ENCODE measurements at regions of chr12 and their contacts with region 1.

Region 1: GRCh38 chr12:69070319-69071090 is 137.5 kb upstream of the CPM start:
- DNase-seq: peak; percentile 32
- H3K4me3 ChIP-seq: no peak overlapping the region
- H3K27ac ChIP-seq: no peak overlapping the region
- H3K27me3 ChIP-seq: no peaks in the 10 kb centered on the region
- CTCF ChIP-seq: peak; percentile 99

Region 2: GRCh38 chr12:68831272-68831671 is 239.2 kb before region 1 on chr12:
- CTCF ChIA-PET with region 1: interaction called, 18 read pairs
- POLR2A ChIA-PET with region 1: no interaction called
- DNase-seq: no peak
- H3K4me3 ChIP-seq: no peak overlapping the region
- H3K27ac ChIP-seq: peak overlapping the region; percentile 11
- H3K27me3 ChIP-seq: no peaks in the 10 kb centered on the region
- CTCF ChIP-seq: no peak

Region 3: GRCh38 chr12:68865399-68866164 is 204.9 kb before region 1 on chr12:
- CTCF ChIA-PET with region 1: interaction called, 48 read pairs
- POLR2A ChIA-PET with region 1: no interaction called
- DNase-seq: no peak
- H3K4me3 ChIP-seq: no peak overlapping the region
- H3K27ac ChIP-seq: no peak overlapping the region
- H3K27me3 ChIP-seq: no peaks in the 10 kb centered on the region
- CTCF ChIP-seq: no peak

Region 4: DNA sequence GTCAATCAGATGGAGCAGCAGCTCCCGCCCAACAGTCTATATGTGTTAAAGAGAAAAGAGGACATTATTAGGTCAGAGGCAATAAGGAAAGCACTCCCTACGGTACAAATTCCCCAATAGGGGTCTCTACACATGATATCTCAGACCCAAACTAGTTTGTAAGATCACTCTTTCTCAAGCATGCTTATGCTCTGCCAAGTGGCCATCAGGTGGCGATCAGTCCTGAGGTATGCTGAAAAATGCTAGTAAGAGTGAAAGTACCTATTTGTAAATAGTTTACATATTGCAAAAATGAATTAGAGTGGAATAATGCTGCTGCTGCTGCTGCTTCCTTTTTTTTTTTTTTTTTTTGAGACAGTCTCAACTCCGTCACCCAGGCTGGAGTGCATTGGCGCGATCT is 198.6 kb before region 1 on chr12:
- CTCF ChIA-PET with region 1: interaction called, 48 read pairs
- POLR2A ChIA-PET with region 1: no interaction called
- DNase-seq: no peak
- H3K4me3 ChIP-seq: no peak overlapping the region
- H3K27ac ChIP-seq: no peak overlapping the region
- H3K27me3 ChIP-seq: no peaks in the 10 kb centered on the region
- CTCF ChIP-seq: peak; percentile 40

Region 5: DNA sequence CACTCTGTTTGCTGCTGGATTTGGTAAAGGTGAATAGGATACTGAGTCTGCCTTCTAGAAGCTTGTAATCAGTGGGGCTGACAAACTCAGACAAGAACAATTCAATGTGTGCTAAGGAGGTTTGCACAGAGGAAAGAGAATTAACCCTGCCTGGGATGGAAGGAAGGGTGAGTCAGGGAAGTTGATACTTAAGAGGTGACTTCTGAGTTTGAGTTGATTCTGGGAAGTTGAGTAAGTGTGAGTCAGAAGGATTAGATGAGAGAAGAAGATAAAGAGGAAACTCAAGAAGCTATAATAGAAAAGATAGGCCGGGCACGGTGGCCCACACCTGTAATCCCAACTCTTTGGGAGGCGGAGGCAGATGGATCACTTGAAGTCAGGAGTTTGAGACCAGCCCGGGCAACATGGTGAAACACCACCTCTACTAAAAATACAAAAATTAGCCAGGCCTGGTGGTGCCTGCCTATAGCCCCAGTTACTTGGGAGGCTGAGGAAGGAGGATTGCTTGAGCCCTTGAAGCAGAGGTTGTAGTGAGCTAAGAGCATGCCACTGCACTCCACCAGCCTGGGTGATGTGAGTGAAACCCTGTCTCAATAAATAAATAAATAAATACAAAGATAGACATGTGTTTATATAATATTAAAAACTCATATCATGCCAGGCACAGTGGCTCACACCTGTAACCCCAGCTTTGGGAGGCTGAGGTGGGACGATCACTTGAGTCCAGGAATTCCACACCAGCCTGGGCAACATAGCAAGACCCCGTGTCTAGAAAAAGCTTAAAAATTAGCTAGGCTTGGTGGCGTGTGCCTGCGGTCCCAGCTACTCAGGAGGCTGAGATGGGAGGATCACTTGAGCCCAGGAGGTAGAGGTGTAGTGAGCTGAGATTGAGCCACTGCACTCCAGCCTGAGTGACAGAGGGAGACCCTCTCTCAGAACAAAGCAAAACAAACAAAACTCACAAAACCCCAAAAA is 10.7 kb before region 1 on chr12:
- CTCF ChIA-PET with region 1: interaction called, 28 read pairs
- POLR2A ChIA-PET with region 1: no interaction called
- DNase-seq: peak; percentile 54
- H3K4me3 ChIP-seq: no peak overlapping the region
- H3K27ac ChIP-seq: peak overlapping the region; percentile 57
- H3K27me3 ChIP-seq: no peaks in the 10 kb centered on the region
- CTCF ChIP-seq: no peak